ENCODE measurements at regions of chr18 and their contacts with region 1.

Region 1: GRCh38 chr18:45317948-45318640 is 297.2 kb upstream of the SLC14A2 start:
- DNase-seq: no peak
- H3K4me3 ChIP-seq: no peak overlapping the region
- H3K27ac ChIP-seq: no peak overlapping the region
- H3K4me1 ChIP-seq: no peaks in the 10 kb centered on the region
- H3K27me3 ChIP-seq: no peaks in the 10 kb centered on the region
- CTCF ChIP-seq: no peak
- EP300 ChIP-seq: no peak
- POLR2A ChIP-seq: no peak
- RAD21 ChIP-seq: no peak

Region 2: GRCh38 chr18:45275367-45276113 is 42.6 kb before region 1 on chr18:
- CTCF ChIA-PET with region 1: interaction called, 25 read pairs
- POLR2A ChIA-PET with region 1: no interaction called
- DNase-seq: no peak
- H3K4me3 ChIP-seq: no peak overlapping the region
- H3K27ac ChIP-seq: no peak overlapping the region
- H3K4me1 ChIP-seq: no peaks in the 10 kb centered on the region
- H3K27me3 ChIP-seq: no peaks in the 10 kb centered on the region
- CTCF ChIP-seq: peak in 2 of 3 experiments; percentile 41 to 68; a peak in 2 of 4 replicates
- EP300 ChIP-seq: no peak
- POLR2A ChIP-seq: no peak
- RAD21 ChIP-seq: peak; percentile 63 to 68

Region 3: DNA sequence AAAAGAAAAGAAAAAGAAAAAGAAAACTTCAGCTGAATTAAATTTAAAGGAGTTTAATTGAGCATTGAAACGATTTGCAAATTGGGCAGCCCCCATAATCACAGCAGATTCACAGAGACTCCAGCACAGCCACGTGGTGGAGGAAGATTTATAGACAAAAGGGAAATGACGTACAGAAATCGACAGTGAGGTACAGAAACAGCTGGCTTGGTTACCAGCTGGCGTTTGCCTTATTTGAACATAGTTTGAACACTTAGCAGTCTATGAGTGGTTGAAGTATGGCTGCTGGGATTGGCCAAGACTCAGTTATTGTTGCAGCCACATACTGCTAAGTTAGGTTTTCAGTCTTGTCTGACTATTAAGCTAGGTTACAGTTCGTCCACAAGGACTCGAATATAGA is 15.1 kb before region 1 on chr18:
- CTCF ChIA-PET with region 1: interaction called, 22 read pairs
- POLR2A ChIA-PET with region 1: no interaction called
- DNase-seq: no peak
- H3K4me3 ChIP-seq: no peak overlapping the region
- H3K27ac ChIP-seq: no peak overlapping the region
- H3K4me1 ChIP-seq: peaks cover 0 to 2% (median 0%) of the 10 kb centered on the region in 4 experiments; a peak in 1 of 7 replicates
- H3K27me3 ChIP-seq: no peaks in the 10 kb centered on the region
- CTCF ChIP-seq: no peak
- EP300 ChIP-seq: no peak
- POLR2A ChIP-seq: no peak
- RAD21 ChIP-seq: no peak

Region 4: DNA sequence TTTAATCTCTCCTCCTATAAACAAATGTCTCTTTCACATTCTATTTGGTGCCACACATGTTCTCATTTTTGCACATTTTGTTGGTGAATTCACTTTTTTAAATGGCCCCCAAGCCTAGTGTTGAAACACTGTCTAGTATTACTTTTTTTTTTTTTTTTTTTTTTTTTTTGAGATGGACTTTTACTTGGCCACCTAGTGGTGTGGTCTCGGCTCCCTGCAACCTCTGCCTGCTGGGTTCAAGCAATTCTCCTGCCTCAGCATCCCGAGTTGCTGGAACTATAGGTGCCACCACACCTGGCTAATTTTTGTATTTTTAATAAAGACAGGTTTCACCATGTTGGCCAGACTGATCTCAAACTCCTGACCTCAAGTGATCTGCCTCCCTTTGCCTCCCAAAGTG is 23.4 kb after region 1 on chr18:
- CTCF ChIA-PET with region 1: interaction called, 11 read pairs
- POLR2A ChIA-PET with region 1: no interaction called
- DNase-seq: no peak
- H3K4me3 ChIP-seq: no peak overlapping the region
- H3K27ac ChIP-seq: no peak overlapping the region
- H3K4me1 ChIP-seq: no peaks in the 10 kb centered on the region
- H3K27me3 ChIP-seq: no peaks in the 10 kb centered on the region
- CTCF ChIP-seq: peak in 2 of 3 experiments; percentile 5; a peak in 2 of 4 replicates
- EP300 ChIP-seq: no peak
- POLR2A ChIP-seq: no peak
- RAD21 ChIP-seq: no peak

Region 5: DNA sequence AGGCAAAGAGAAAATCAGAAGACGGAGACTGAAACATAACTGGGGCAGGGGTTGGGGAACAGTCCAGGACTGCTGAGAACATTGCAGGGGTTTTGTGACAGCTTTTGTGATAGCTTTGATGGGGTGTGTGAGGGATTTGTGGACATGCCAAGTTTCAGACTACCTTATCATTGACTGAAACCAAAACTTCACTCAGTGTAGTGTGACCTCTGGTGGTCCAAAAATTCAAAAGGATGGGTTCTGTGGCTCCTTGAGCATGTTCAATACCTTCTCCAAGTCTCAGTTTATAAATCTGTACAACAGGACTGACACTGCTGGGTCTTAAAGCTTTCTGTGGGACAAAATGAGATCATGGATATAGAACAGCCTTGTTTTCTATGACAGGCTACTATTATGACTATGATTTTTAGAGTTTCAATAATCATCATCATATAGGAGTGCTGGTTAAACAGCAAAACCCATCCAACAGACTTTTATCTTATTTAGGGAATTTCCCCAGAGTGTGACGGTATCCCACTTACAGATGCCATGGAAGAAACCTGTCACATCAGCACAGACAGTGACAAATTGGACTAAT is 37.9 kb after region 1 on chr18:
- CTCF ChIA-PET with region 1: interaction called, 13 read pairs
- POLR2A ChIA-PET with region 1: no interaction called
- DNase-seq: no peak
- H3K4me3 ChIP-seq: no peak overlapping the region
- H3K27ac ChIP-seq: no peak overlapping the region
- H3K4me1 ChIP-seq: no peaks in the 10 kb centered on the region
- H3K27me3 ChIP-seq: no peaks in the 10 kb centered on the region
- CTCF ChIP-seq: 0 out of 4 replicates have a peak, but pooled peaks of 1 of the 3 experiments have one; percentile 2
- EP300 ChIP-seq: no peak
- POLR2A ChIP-seq: no peak
- RAD21 ChIP-seq: peak; percentile 19 to 31; a peak in 2 of 4 replicates

Region 6: DNA sequence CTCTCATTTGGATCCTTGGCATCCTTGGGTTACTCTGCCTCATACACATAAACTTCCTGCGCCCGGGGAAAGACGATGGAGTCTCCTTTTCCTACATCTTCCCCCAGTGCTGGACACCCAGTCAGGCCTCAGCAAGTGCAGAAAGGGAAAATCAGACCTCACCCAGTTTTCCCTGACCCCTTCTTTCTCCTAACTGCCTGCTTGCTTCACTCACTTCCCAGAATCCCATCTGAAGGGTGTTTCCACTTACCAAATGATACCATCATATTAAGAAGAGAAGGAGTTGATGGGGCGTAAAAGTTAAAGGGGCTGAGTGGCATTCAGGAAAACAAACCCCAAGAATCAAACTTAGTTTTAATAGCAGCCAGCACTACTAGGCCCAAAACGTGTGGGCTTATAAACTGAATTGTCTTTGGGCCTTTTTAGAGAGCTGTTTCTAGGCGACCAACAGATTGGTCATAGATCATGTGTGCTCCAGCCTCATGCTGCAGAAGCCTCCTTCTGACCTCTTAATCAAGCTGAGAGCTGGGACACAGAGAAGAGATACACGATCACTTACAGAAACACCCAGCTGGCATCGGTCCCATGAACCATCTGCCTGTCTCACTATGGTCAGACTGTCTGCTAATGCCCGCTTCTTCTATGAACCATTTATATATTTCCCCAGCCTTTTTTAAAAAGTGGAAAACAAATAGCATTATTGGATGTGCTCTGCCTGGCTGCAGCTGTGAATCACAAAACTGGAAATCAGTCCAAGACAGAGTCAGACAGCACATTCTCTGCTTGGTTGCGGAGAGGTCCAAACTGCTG is 131.5 kb after region 1 on chr18:
- CTCF ChIA-PET with region 1: no interaction called
- POLR2A ChIA-PET with region 1: no interaction called
- DNase-seq: no peak
- H3K4me3 ChIP-seq: no peak overlapping the region
- H3K27ac ChIP-seq: no peak overlapping the region
- H3K4me1 ChIP-seq: no peaks in the 10 kb centered on the region
- H3K27me3 ChIP-seq: no peaks in the 10 kb centered on the region
- CTCF ChIP-seq: no peak
- EP300 ChIP-seq: no peak
- POLR2A ChIP-seq: no peak
- RAD21 ChIP-seq: no peak

Measured in H1 (cell line).